Activated naive CD4-positive, alpha-beta T cell treated with anti-CD3 and anti-CD28 coated beads for 36 hours (primary cell): ENCODE measurements at regions of chr16 and their contacts with region 1.

Region 1: GRCh38 chr16:20383106-20384029 is 21.2 kb downstream of the PDILT start:
- DNase-seq: peak; percentile 70
- H3K4me3 Mint-ChIP-seq: no peak overlapping the region
- H3K27ac Mint-ChIP-seq: no peak overlapping the region
- H3K4me1 Mint-ChIP-seq: no peaks in the 10 kb centered on the region
- H3K27me3 Mint-ChIP-seq: peaks cover 9% of the 10 kb centered on the region

Region 2: GRCh38 chr16:19555162-19555937 is 828.0 kb before region 1 on chr16 and contains the start of gene VPS35L:
- CTCF ChIA-PET with region 1: interaction called, 6 read pairs
- intact Hi-C with region 1: loop called (anchors 10 kb)
- DNase-seq: peak; percentile 93
- H3K4me3 Mint-ChIP-seq: peak within 1 kb of the TSS; percentile 91
- H3K27ac Mint-ChIP-seq: peak within 1 kb of the TSS; percentile 89
- H3K4me1 Mint-ChIP-seq: peaks cover 17% of the 10 kb centered on the region
- H3K27me3 Mint-ChIP-seq: no peaks in the 10 kb centered on the region
- total RNA-seq, gene VPS35L: 30.3 to 32.4 TPM

Region 3: DNA sequence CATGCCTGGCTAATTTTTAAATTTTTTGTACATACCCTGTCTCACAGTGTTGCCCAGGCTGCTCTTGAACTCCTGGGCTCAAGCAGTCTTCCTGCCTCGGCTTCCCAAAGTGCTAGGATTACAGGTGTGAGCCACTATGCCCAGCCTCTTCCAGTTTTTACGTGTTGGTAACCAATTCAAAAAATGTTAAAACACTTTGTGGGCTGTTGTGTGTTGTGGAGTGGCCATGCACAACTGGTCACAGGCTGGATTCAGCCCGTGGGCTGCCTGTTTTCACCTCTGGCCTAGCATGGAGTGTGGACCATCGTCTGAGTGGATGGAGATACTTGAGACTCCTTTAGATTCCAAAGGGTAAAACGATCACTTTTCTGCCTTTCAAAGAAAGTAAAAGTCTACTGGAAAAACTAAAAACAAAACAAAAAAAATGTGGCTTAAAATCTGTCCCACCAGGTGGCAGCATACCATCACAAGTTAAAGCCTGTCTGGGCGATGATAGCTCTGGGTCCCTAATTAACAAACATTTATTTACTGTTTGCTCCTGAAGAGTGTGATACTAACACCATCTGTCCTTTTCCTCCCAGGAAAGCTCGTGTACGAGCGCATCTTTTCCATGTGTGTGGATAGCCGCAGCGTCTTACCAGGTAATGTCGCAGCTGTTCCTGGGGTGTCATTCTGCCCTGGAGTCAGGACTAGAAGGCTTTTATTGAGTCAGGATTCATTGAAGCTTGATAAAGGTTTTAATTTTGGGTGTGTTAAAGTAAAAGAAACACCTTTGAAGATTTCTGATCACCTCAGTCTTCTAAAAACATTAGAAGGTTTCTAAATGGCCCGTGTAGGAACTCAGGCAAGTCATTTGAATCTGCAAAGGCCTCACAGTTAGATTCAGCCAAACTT is 782.0 kb before region 1 on chr16:
- CTCF ChIA-PET with region 1: no interaction called
- intact Hi-C with region 1: loop called (anchors 10 kb)
- DNase-seq: peak; percentile 55
- H3K4me3 Mint-ChIP-seq: no peak overlapping the region
- H3K27ac Mint-ChIP-seq: no peak overlapping the region
- H3K4me1 Mint-ChIP-seq: no peaks in the 10 kb centered on the region
- H3K27me3 Mint-ChIP-seq: no peaks in the 10 kb centered on the region

Region 4: DNA sequence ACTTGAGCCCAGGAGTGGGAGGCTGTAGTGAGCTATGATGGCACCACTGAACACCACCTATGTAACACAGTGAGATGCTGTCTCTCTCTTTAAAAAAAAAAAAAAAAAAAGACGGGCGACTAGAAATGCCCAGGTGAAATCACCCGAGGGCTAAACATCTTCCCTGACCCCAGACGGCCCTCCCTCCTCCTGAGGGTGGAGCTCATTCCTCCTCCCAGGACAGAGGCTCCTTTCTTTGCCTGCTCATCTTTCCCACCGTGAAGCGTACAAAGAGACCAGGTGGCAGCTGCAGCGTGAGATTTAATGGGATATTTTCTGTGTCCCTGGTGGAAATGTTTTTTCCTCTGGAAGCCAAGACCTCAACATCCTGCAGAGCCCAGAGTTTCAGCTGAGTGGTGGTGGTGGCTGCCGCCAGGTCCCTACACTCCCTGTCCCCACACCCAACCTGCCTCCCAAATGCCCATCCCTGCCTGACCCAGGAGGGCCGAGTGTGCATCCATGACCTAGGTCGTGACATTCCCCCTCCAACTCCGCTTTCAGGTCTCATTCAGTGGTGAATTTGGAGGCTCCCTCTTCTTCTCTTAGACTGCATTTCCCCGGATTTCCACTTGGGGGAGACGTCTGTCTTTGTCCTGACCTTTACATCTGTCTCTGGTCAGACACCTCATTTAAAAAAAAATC is 484.3 kb before region 1 on chr16:
- CTCF ChIA-PET with region 1: interaction called, 9 read pairs
- intact Hi-C with region 1: loop called (anchors 1 kb)
- DNase-seq: peak; percentile 71
- H3K4me3 Mint-ChIP-seq: no peak overlapping the region
- H3K27ac Mint-ChIP-seq: no peak overlapping the region
- H3K4me1 Mint-ChIP-seq: peaks cover 1% of the 10 kb centered on the region
- H3K27me3 Mint-ChIP-seq: peaks cover 2% of the 10 kb centered on the region

Region 5: GRCh38 chr16:19907161-19907992 is 476.0 kb before region 1 on chr16:
- CTCF ChIA-PET with region 1: interaction called, 52 read pairs
- intact Hi-C with region 1: loop called (anchors 1 kb)
- DNase-seq: peak; percentile 79
- H3K4me3 Mint-ChIP-seq: no peak overlapping the region
- H3K27ac Mint-ChIP-seq: no peak overlapping the region
- H3K4me1 Mint-ChIP-seq: peaks cover 8% of the 10 kb centered on the region
- H3K27me3 Mint-ChIP-seq: peaks cover 14% of the 10 kb centered on the region

Region 6: GRCh38 chr16:20300312-20301097 is 82.9 kb before region 1 on chr16:
- CTCF ChIA-PET with region 1: interaction called, 7 read pairs
- intact Hi-C with region 1: loop called (anchors 5 kb)
- DNase-seq: peak; percentile 53
- H3K4me3 Mint-ChIP-seq: no peak overlapping the region
- H3K27ac Mint-ChIP-seq: no peak overlapping the region
- H3K4me1 Mint-ChIP-seq: no peaks in the 10 kb centered on the region
- H3K27me3 Mint-ChIP-seq: peaks cover 12% of the 10 kb centered on the region

Region 7: GRCh38 chr16:20393801-20394577 is 10.6 kb after region 1 on chr16:
- CTCF ChIA-PET with region 1: interaction called, 23 read pairs
- intact Hi-C with region 1: no loop called
- DNase-seq: no peak
- H3K4me3 Mint-ChIP-seq: no peak overlapping the region
- H3K27ac Mint-ChIP-seq: no peak overlapping the region
- H3K4me1 Mint-ChIP-seq: no peaks in the 10 kb centered on the region
- H3K27me3 Mint-ChIP-seq: no peaks in the 10 kb centered on the region

Region 8: GRCh38 chr16:20409398-20410120 is 26.2 kb after region 1 on chr16 and contains the start of gene ACSM5:
- CTCF ChIA-PET with region 1: no interaction called
- intact Hi-C with region 1: no loop called
- DNase-seq: no peak
- H3K4me3 Mint-ChIP-seq: no peak within 1 kb of the TSS
- H3K27ac Mint-ChIP-seq: no peak within 1 kb of the TSS
- H3K4me1 Mint-ChIP-seq: no peaks in the 10 kb centered on the region
- H3K27me3 Mint-ChIP-seq: peaks cover 4% of the 10 kb centered on the region
- total RNA-seq, gene ACSM5: not detected